Adrenal gland (tissue), 19 donors: ENCODE measurements at regions of chr2 and their contacts with region 1.

Region 1: DNA sequence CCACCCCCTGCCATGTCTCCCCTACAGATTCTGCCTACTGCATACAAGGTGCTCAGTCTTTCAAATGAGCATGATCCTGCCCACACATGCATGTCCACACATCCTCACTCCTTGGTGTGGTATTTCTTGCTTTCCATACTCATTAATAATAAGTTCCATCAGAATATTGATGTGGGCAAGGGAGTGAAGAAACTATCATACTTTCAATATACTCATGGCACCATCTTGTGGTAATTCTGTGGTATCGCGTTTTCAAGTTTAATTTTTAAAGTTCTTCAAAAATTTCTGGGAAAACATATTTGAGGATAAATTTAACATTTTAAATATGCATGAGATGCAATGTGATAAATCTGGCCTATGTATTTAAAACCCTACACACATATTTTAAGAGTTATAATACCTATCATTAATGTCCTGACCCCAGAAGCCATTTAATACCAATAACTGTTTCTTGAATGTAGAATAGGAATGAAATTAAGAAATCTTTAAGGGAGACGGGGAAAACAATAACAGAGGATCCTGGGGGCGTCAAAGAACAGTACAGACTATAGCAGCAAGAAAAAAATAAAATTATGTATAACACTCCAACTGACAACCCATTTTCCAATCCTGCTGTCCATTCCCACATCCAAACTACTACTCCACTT is 110.1 kb downstream of the ZNF385B start:
- DNase-seq: no peak
- H3K4me3 ChIP-seq: no peak overlapping the region
- H3K27ac ChIP-seq: no peak overlapping the region
- H3K4me1 ChIP-seq: no peaks in the 10 kb centered on the region
- H3K27me3 ChIP-seq: no peaks in the 10 kb centered on the region
- CTCF ChIP-seq: peak; percentile 55 to 81 (median 69)
- POLR2A ChIP-seq: no peak

Region 2: GRCh38 chr2:179417436-179417949 is 333.8 kb before region 1 on chr2:
- intact Hi-C with region 1: loop called in 1 of 2 experiments (anchors 5 kb)
- DNase-seq: no peak
- H3K4me3 ChIP-seq: no peak overlapping the region
- H3K27ac ChIP-seq: no peak overlapping the region
- H3K4me1 ChIP-seq: no peaks in the 10 kb centered on the region
- H3K27me3 ChIP-seq: no peaks in the 10 kb centered on the region
- CTCF ChIP-seq: no peak
- POLR2A ChIP-seq: no peak

Region 3: DNA sequence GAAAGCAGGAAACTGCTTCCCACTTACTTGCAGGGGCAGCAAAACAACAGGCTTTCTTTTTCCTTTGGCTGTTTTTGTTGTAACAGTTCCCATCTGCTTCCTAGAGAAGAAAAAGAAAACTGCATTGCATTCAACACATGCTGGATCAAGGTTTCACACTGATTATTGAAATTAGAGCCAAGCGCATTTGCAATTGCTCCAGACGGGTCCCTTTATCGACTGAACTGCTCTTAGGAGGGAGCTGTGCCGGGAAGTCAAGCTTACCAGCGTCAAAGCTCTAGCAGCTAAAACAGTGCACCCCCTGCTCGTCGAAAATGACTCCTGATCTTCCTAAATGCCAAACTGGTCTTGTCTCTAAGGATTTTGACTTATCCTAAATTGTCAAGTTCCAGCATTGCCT is 322.6 kb before region 1 on chr2:
- intact Hi-C with region 1: loop called in 1 of 2 experiments (anchors 5 kb)
- DNase-seq: no peak
- H3K4me3 ChIP-seq: no peak overlapping the region
- H3K27ac ChIP-seq: no peak overlapping the region
- H3K4me1 ChIP-seq: no peaks in the 10 kb centered on the region
- H3K27me3 ChIP-seq: no peaks in the 10 kb centered on the region
- CTCF ChIP-seq: no peak
- POLR2A ChIP-seq: no peak

Region 4: GRCh38 chr2:179677077-179677688 is 74.1 kb before region 1 on chr2:
- intact Hi-C with region 1: no loop called
- DNase-seq: no peak
- H3K4me3 ChIP-seq: no peak overlapping the region
- H3K27ac ChIP-seq: no peak overlapping the region
- H3K4me1 ChIP-seq: peaks cover 0 to 7% of the 10 kb centered on the region in 2 donors
- H3K27me3 ChIP-seq: no peaks in the 10 kb centered on the region
- CTCF ChIP-seq: no peak
- POLR2A ChIP-seq: no peak